Common myeloid progenitor, CD34-positive (primary cell): ENCODE measurements at regions of chr14 and their contacts with region 1.

Region 1: GRCh38 chr14:31449971-31450610 is 7.2 kb downstream of the DTD2 start:
- DNase-seq: peak; percentile 44 to 65 (median 61)
- H3K4me3 ChIP-seq: no peak overlapping the region
- H3K27ac ChIP-seq: no peak overlapping the region
- H3K4me1 ChIP-seq: no peaks in the 10 kb centered on the region
- H3K27me3 ChIP-seq: no peaks in the 10 kb centered on the region

Region 2: DNA sequence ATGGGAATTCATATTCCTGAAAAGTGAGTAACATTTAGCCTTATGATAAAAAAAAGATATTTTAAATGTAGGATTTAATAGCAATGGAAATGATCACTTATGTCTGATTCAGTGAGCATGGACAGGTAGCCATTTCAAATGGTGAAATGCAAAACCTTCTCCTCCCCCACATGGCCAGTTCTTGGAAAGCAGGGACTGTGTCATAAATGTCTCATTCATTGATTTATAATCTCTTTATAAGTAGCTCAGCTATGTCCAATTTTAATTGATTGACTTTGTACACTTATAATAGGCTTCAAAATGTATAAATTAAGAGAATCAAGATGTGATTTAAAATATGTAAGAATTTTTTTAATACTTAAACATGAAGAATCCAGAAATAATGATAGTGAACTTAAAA is 852.6 kb before region 1 on chr14:
- CTCF ChIA-PET with region 1: no interaction called
- POLR2A ChIA-PET with region 1: no interaction called
- DNase-seq: no peak
- H3K4me3 ChIP-seq: no peak overlapping the region
- H3K27ac ChIP-seq: no peak overlapping the region
- H3K4me1 ChIP-seq: no peaks in the 10 kb centered on the region
- H3K27me3 ChIP-seq: no peaks in the 10 kb centered on the region

Region 3: DNA sequence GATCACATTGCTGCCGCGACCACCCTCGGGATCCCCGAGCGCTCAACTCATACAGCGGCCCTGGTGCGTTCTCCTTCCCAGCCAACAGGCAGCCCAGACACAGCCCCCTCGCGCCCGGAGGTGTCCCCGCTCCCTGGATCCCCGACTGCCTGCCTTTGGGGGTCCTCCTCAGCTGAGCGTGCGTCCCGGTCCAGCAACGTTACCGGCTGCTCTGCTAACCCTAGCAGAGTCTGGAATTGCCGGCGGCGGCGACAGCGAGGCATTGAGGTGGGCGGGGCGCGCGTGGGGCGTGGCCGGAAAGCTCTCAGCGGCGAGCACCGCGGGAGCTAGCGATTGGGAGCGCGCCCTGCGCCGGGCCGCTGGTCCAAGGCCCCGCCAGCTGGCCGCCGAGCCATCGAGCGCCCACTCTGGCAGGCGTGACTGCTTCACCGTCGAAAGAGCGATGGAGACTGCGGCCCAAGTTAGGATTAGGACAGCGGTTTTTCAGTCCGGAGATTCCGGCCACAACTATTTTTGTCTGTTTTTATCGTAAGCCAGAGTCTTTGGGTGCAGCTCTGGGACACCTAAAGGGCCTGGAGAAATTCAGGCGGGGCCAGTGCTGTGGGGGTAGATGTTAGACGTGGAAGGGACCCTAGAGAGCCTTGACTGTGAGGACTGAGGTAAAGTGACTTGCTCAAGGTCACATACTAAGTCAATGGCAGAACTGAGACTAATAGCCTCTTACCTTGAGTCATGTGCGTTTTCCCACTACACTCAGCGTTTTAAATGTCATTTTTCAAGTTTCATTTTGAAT is 29.6 kb before region 1 on chr14 and contains the start of gene HEATR5A:
- CTCF ChIA-PET with region 1: interaction called, 20 read pairs
- POLR2A ChIA-PET with region 1: interaction called, 9 read pairs
- DNase-seq: peak; percentile 94 to 97 (median 97)
- H3K4me3 ChIP-seq: peak within 1 kb of the TSS; percentile 59 to 99 (median 98)
- H3K27ac ChIP-seq: peak within 1 kb of the TSS; percentile 47 to 90
- H3K4me1 ChIP-seq: peaks cover 0 to 22% (median 13%) of the 10 kb centered on the region in 4 experiments
- H3K27me3 ChIP-seq: no peaks in the 10 kb centered on the region

Region 4: GRCh38 chr14:31770271-31770670 is 320.2 kb after region 1 on chr14:
- CTCF ChIA-PET with region 1: no interaction called
- POLR2A ChIA-PET with region 1: no interaction called
- DNase-seq: peak in 1 of 3 donors; percentile 7
- H3K4me3 ChIP-seq: no peak overlapping the region
- H3K27ac ChIP-seq: no peak overlapping the region
- H3K4me1 ChIP-seq: no peaks in the 10 kb centered on the region
- H3K27me3 ChIP-seq: no peaks in the 10 kb centered on the region